PC-9 (cell line): ENCODE measurements at regions of chr13 and their contacts with region 1.

Region 1: DNA sequence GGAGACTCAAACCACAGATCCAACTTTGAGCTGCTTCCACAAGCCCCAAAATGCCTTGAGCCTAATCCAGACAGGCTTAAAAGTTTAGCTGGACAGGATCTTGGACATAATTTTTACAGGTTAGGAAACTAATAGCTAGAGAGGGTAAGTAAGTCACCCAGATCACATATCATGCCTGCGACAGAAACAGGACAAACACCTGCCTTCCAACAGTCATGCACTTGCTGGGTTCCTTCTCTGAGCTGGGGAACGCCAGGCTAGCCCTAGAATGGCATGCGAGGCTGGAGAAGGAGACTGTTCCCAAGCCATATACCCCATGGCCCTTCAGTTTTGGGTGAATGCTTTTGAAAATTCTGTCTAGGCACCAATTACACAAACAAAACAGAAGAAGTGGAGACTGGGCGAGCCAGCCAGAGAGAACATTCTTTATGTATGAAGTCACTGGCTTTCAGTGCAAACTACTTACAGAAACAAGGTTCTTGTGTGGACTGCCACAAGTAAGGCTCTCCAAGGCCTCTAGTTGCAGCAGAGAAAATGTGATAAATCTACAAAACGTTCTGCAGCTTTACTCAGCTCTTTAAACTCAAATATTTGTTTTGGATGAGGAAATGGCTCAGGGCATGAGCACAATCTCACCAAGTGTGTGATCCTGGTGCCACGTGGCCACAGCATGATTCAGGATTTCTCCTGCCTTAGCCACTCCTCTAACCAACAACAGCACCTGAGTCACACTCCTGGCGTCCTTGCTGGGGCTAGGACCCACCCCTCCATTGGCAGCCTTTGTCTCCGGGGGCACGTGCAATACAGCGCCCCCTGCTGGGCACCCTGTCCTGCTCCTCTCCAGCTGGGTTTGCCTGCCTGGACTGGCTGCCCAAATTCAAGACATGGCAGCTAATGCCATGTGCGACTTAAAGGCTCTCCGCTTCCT is 73.4 kb upstream of the UBL3 start:
- DNase-seq: peak; percentile 83 to 97
- H3K4me3 ChIP-seq: peak overlapping the region; percentile 32; the same call in 1 of the 2 replicates
- H3K27ac ChIP-seq: peak overlapping the region; percentile 98
- H3K4me1 ChIP-seq: peaks cover 82% of the 10 kb centered on the region
- H3K27me3 ChIP-seq: no peaks in the 10 kb centered on the region
- CTCF ChIP-seq: peak; percentile 99

Region 2: DNA sequence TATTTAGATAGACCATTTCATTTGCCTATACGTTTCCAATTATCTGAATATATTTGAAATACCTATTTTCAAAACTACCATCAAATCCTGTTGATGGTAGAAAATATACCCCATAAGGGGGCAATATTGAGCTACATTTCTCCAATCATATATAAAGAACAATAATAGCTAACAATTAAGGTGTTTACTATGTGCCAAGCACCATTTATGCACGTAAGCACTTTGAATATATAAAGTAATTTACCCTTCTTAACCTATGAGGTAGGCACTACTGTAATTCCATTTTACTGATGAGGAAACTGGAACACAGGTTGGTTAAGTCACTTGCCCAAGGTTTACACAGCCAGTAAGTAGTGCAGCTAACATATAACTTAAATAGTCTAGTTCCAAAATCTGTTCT is 152.6 kb before region 1 on chr13:
- CTCF ChIA-PET with region 1: interaction called, 3 read pairs
- POLR2A ChIA-PET with region 1: no interaction called
- intact Hi-C with region 1: loop called (anchors 1 kb)
- DNase-seq: peak in 1 of 2 experiments; percentile 46
- H3K4me3 ChIP-seq: no peak overlapping the region
- H3K27ac ChIP-seq: no peak overlapping the region
- H3K4me1 ChIP-seq: no peaks in the 10 kb centered on the region
- H3K27me3 ChIP-seq: no peaks in the 10 kb centered on the region
- CTCF ChIP-seq: peak; percentile 78

Region 3: GRCh38 chr13:29902101-29902952 is 21.5 kb before region 1 on chr13:
- CTCF ChIA-PET with region 1: interaction called, 14 read pairs
- POLR2A ChIA-PET with region 1: interaction called, 6 read pairs
- intact Hi-C with region 1: loop called (anchors 1 kb)
- DNase-seq: peak; percentile 63 to 84
- H3K4me3 ChIP-seq: peak overlapping the region; percentile 8; the same call in 1 of the 2 replicates
- H3K27ac ChIP-seq: peak overlapping the region; percentile 60
- H3K4me1 ChIP-seq: peaks cover 43% of the 10 kb centered on the region
- H3K27me3 ChIP-seq: no peaks in the 10 kb centered on the region
- CTCF ChIP-seq: no peak

Region 4: DNA sequence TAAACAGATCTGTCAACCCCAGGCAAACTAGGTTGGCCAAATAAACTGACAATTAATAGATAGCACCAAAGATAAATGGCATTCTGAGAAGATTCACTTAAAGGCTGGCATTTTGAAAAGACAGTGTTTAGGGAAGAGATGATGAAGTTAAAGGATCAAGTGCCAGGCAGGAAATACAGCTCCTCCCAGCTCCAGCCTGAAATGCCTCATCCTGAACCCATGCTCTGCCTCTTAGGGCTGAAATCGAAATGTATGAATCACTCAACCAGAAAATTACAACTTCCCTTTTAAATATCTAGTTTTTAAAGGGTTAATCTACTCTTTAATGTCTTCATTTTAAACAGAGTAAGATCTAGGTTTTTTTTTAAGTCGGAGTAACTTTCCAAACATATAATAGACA is 97.8 kb after region 1 on chr13:
- CTCF ChIA-PET with region 1: interaction called, 10 read pairs
- POLR2A ChIA-PET with region 1: no interaction called
- intact Hi-C with region 1: loop called (anchors 2 kb)
- DNase-seq: no peak
- H3K4me3 ChIP-seq: no peak overlapping the region
- H3K27ac ChIP-seq: no peak overlapping the region
- H3K4me1 ChIP-seq: peaks cover 41% of the 10 kb centered on the region
- H3K27me3 ChIP-seq: no peaks in the 10 kb centered on the region
- CTCF ChIP-seq: no peak

Region 5: GRCh38 chr13:30114571-30115256 is 190.9 kb after region 1 on chr13:
- CTCF ChIA-PET with region 1: interaction called, 15 read pairs
- POLR2A ChIA-PET with region 1: interaction called, 4 read pairs
- intact Hi-C with region 1: loop called (anchors 1 kb)
- DNase-seq: peak; percentile 64 to 85
- H3K4me3 ChIP-seq: peak overlapping the region; percentile 64; the same call in 1 of the 2 replicates
- H3K27ac ChIP-seq: 0 out of 2 replicates have a peak overlapping the region, but pooled peaks have one; percentile 13
- H3K4me1 ChIP-seq: peaks cover 17% of the 10 kb centered on the region
- H3K27me3 ChIP-seq: no peaks in the 10 kb centered on the region
- CTCF ChIP-seq: peak; percentile 91